ENCODE measurements at regions of chr19 and their contacts with region 1.

Region 1: GRCh38 chr19:3108775-3109174 is 14.6 kb downstream of the GNA11 start:
- DNase-seq: peak; percentile 83
- H3K4me3 Mint-ChIP-seq: no peak overlapping the region
- H3K27ac Mint-ChIP-seq: peak overlapping the region; percentile 50
- H3K4me1 Mint-ChIP-seq: peaks cover 9% of the 10 kb centered on the region
- H3K27me3 Mint-ChIP-seq: peaks cover 18% of the 10 kb centered on the region

Region 2: GRCh38 chr19:2950286-2951124 is 158.3 kb before region 1 on chr19:
- CTCF ChIA-PET with region 1: interaction called, 165 read pairs
- DNase-seq: peak; percentile 100
- H3K4me3 Mint-ChIP-seq: peak overlapping the region; percentile 94
- H3K27ac Mint-ChIP-seq: peak overlapping the region; percentile 94
- H3K4me1 Mint-ChIP-seq: peaks cover 38% of the 10 kb centered on the region
- H3K27me3 Mint-ChIP-seq: no peaks in the 10 kb centered on the region

Region 3: DNA sequence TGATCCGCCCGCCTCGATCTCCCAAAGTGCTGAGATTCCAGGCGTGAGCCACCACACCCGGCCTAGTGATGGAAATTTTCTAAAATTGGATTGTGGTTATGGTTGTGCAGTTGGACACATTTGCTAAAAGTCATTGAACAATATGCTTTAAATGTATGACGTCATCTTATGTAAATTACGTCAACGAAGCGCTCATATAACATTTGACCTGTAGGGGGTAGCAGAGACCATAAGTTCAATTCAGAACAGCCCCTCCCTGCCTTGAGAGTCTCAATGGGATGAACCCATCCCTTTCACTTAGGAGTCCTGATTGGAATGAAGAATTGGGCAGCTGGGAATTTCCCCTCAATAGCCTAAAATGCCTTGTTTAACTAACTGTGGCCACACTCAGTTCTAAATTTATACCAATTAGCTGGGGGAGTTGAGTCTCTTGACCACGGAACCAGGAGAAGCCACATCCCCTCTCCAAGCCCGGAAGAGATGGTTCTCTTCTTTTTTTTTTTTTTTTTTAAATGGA is 146.7 kb before region 1 on chr19:
- CTCF ChIA-PET with region 1: interaction called, 165 read pairs
- DNase-seq: peak; percentile 63
- H3K4me3 Mint-ChIP-seq: peak overlapping the region; percentile 26
- H3K27ac Mint-ChIP-seq: peak overlapping the region; percentile 83
- H3K4me1 Mint-ChIP-seq: peaks cover 5% of the 10 kb centered on the region
- H3K27me3 Mint-ChIP-seq: peaks cover 5% of the 10 kb centered on the region

Region 4: DNA sequence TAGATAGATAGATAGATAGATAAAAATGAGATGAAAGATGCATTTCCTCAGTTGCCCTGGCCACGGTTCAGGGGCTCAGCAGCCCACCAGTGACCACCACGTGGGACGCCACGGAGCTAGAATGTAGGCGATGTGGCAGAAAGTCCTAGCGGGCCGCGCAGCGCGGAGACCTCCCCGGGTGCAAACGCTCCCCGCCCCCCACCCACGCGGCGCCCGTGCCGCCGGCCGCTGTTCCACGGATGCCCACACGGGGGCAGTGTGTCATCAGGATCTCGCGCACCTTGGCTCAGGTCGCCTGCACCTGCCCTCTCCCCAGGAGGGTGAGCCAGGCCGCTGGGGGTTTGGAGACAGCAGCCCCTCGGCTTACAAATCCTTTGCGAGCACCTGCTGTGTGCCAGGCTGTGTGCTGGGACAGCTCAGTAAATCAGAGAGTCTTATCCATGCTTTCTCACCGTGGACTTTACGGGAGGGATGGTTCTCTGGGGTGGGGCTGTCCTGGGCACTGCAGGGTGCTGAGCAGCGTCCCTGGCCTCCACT is 32.8 kb before region 1 on chr19:
- CTCF ChIA-PET with region 1: interaction called, 75 read pairs
- DNase-seq: peak; percentile 81
- H3K4me3 Mint-ChIP-seq: no peak overlapping the region
- H3K27ac Mint-ChIP-seq: no peak overlapping the region
- H3K4me1 Mint-ChIP-seq: peaks cover 4% of the 10 kb centered on the region
- H3K27me3 Mint-ChIP-seq: peaks cover 48% of the 10 kb centered on the region

Region 5: GRCh38 chr19:3220576-3220975 is 111.8 kb after region 1 on chr19:
- CTCF ChIA-PET with region 1: no interaction called
- DNase-seq: no peak
- H3K4me3 Mint-ChIP-seq: no peak overlapping the region
- H3K27ac Mint-ChIP-seq: no peak overlapping the region
- H3K4me1 Mint-ChIP-seq: no peaks in the 10 kb centered on the region
- H3K27me3 Mint-ChIP-seq: peaks cover 10% of the 10 kb centered on the region

Region 6: GRCh38 chr19:3289971-3290569 is 181.3 kb after region 1 on chr19:
- CTCF ChIA-PET with region 1: no interaction called
- DNase-seq: no peak
- H3K4me3 Mint-ChIP-seq: no peak overlapping the region
- H3K27ac Mint-ChIP-seq: no peak overlapping the region
- H3K4me1 Mint-ChIP-seq: peaks cover 4% of the 10 kb centered on the region
- H3K27me3 Mint-ChIP-seq: peaks cover 59% of the 10 kb centered on the region

Measured in activated naive CD4-positive, alpha-beta T cell treated with anti-CD3 and anti-CD28 coated beads, Interleukin-2, amount 10 ng/mL, durations not matched to agents 7 days and 5 days (primary cell).